PC-9 (cell line): ENCODE measurements at regions of chr11 and their contacts with region 1.

Region 1: DNA sequence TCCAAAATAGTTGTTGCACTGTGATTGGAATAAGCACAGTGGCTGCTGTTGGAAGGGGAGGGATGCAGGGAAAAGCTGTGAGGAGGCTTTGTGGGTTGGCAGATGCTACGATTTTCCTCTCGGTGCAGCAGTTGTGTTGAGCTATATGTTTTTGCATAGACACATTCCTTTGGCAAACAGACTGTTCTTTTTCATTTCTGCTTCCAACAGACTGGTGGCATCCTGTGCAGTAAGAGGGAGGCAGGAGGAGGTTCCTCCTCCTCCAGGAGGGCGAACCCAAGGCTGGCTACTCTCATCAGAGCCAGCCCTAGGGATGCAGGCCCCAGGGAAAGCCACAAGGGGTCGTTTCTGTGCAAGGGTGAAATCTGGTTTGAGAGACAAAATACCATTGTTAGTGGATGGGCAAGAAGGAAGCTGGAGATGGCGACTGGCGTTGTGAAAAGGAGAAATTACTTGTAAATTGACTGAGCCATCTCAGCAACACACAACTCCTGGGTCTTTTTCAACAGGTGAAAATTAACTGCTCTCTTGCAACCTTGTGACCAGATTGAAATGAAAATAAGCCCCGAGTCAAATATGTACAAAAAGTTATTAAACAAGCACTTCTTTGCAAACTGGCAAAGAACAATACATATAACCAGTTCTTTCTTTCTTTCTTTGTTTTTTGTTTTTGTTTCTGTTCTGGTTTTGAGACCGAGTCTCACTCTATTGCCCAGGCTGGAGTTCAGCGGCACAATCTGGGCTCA is 26.5 kb upstream of the UBASH3B start:
- DNase-seq: peak; percentile 53 to 65
- H3K4me3 ChIP-seq: no peak overlapping the region
- H3K27ac ChIP-seq: no peak overlapping the region
- H3K4me1 ChIP-seq: peaks cover 36% of the 10 kb centered on the region
- H3K27me3 ChIP-seq: no peaks in the 10 kb centered on the region
- CTCF ChIP-seq: peak; percentile 86

Region 2: DNA sequence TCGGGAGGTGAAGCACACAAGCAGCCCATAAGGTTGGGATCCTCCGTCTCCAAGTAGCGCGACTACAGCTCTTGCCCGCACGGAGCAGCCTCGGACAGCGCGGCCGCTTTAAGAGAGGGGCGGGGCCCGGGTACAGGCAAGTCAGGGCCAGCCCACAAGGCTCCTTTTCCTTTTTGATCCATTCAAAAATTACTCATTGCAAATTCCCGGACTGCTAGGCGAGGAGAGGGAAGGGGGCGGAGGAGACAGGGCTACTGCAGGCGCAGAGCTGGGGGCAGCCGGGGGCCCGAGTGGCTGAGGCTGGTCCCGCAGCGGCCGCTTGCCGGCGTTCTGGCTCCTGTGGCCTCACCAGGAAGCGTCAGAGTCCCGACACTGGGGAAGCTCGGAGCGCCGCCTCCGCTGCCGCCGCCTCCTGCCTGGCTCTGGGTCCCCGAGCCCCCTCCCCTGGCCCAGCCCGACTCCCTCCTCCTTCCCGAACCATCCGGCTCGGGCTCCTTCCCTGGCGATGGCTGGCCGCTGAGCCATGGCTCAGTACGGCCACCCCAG is 26.6 kb after region 1 on chr11 and contains the start of gene UBASH3B:
- CTCF ChIA-PET with region 1: no interaction called
- POLR2A ChIA-PET with region 1: interaction called, 10 read pairs
- intact Hi-C with region 1: no loop called
- DNase-seq: peak; percentile 81 to 85
- H3K4me3 ChIP-seq: peak within 1 kb of the TSS; percentile 81
- H3K27ac ChIP-seq: peak within 1 kb of the TSS; percentile 91
- H3K4me1 ChIP-seq: peaks cover 42% of the 10 kb centered on the region
- H3K27me3 ChIP-seq: no peaks in the 10 kb centered on the region
- CTCF ChIP-seq: peak; percentile 19; the same call in 1 of the 2 replicates
- total RNA-seq, gene UBASH3B: 80.3 and 81.9 TPM in 2 replicates

Region 3: DNA sequence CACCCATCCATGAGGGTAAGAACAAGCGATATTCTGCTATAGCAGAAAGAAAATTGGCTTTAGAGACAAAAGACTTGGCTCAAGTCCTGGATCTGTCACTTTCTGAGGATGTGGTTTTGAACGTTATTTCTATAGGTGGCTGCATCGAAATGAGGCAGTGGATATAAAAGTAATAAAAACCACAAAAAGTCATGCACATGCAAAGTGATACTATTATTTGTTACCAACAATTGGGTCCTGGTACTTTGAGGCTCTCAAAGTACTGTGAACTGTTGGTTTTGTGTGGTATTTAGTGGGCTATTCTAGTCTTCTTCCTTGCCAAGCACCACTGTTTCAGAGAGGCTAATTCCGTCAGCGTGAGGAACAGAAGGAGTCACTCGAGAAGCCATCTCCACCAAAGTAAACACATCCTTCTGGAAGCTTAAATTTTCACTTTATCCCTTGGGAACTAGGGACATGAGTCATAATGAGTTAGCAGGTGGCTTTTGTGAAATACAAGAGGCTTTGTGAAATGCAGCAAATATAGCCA is 39.6 kb after region 1 on chr11:
- CTCF ChIA-PET with region 1: no interaction called
- POLR2A ChIA-PET with region 1: no interaction called
- intact Hi-C with region 1: no loop called
- DNase-seq: peak in 1 of 2 experiments; percentile 94
- H3K4me3 ChIP-seq: peak overlapping the region; percentile 4; the same call in 1 of the 2 replicates
- H3K27ac ChIP-seq: peak overlapping the region; percentile 90
- H3K4me1 ChIP-seq: peaks cover 86% of the 10 kb centered on the region
- H3K27me3 ChIP-seq: no peaks in the 10 kb centered on the region
- CTCF ChIP-seq: no peak

Region 4: DNA sequence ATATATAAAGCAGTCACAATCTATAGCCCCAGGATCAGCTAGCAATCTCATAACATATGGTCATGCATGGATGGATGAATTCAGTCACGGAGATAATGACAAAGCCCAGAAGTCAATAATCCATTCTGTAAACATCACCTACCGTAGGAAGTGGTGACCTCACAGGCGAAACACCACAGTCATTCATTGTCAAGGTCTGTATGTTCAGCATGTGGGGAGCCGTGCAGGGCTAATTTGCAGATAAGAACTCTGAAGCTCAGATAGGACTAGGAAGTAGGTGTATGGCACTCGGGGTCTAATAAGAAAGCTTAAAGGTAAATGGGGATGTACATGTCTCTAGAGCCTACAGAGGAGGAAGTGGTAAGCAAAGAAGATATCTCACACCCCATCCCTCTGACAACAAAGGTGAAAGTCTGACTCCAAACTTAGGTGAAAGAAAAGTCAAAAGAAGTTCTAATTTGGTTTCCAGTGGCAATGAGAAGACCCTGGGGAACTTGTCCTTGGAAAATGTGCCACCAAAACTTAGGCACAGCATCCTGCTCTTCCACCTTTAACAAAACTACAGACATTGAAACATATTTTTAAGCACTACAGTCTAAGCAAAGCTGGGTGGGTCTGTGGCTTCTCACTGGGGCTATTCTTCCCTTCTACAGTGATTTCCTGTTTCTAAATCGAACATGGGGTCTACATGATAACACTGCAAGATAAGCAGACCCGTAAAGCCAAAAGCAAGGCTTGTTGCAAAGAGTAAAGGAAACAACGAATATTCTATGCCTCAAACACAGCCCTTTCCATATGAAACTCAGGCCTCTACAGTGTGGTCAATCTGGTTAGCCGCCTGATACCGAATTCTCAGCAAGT is 214.5 kb after region 1 on chr11:
- CTCF ChIA-PET with region 1: interaction called, 11 read pairs
- POLR2A ChIA-PET with region 1: no interaction called
- intact Hi-C with region 1: no loop called
- DNase-seq: no peak
- H3K4me3 ChIP-seq: no peak overlapping the region
- H3K27ac ChIP-seq: no peak overlapping the region
- H3K4me1 ChIP-seq: no peaks in the 10 kb centered on the region
- H3K27me3 ChIP-seq: no peaks in the 10 kb centered on the region
- CTCF ChIP-seq: no peak